B cell (primary cell): ENCODE measurements at regions of chr2 and their contacts with region 1.

Region 1: DNA sequence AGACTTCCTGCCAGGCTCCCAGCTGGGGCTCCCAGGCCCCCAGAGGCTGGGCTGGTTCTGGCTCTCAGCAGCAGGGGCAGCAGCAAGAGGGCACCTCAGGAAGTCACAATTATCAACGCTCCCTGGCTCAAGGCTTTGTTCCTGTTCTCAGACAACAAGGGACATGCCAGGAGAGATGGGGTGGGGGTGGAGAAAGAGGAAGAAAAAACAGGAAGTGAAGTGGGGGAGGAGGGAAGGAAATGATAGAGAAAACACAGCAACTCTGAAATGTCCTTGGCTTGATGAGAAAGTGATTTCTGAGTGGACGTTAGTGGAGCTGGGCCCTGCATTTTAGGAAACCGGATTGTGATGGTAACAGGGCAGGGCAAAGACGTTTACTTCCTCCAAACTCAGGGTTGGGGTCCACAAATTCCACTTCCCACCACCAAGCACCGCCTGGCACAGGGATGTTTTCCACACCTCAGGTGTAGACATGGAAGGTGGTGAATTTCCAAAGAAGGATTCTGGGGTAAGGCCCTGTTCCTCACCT is 40.4 kb downstream of the CYRIA start:
- DNase-seq: peak; percentile 80
- ATAC-seq: peak; percentile 49
- H3K4me3 ChIP-seq: peak overlapping the region; percentile 33 to 58 (median 46)
- H3K4me3 Mint-ChIP-seq: peak overlapping the region; percentile 83
- H3K27ac ChIP-seq: peak overlapping the region; percentile 78 to 92
- H3K27ac Mint-ChIP-seq: peak overlapping the region; percentile 93
- H3K4me1 ChIP-seq: peaks cover 95 to 98% of the 10 kb centered on the region in 2 donors
- H3K4me1 Mint-ChIP-seq: peaks cover 98% of the 10 kb centered on the region
- H3K27me3 ChIP-seq: no peaks in the 10 kb centered on the region
- H3K27me3 Mint-ChIP-seq: no peaks in the 10 kb centered on the region
- CTCF ChIP-seq: no peak

Region 2: GRCh38 chr2:16608661-16609643 is 16.3 kb before region 1 on chr2:
- CTCF ChIA-PET with region 1: interaction called, 84 read pairs
- POLR2A ChIA-PET with region 1: no interaction called
- intact Hi-C with region 1: loop called (anchors 2 kb)
- DNase-seq: peak; percentile 86
- ATAC-seq: peak; percentile 95
- H3K4me3 ChIP-seq: peak overlapping the region; percentile 38 to 66 (median 60)
- H3K4me3 Mint-ChIP-seq: peak overlapping the region; percentile 87
- H3K27ac ChIP-seq: no peak overlapping the region
- H3K27ac Mint-ChIP-seq: peak overlapping the region; percentile 53
- H3K4me1 ChIP-seq: peaks cover 4 to 13% of the 10 kb centered on the region in 2 donors
- H3K4me1 Mint-ChIP-seq: peaks cover 27% of the 10 kb centered on the region
- H3K27me3 ChIP-seq: no peaks in the 10 kb centered on the region
- H3K27me3 Mint-ChIP-seq: no peaks in the 10 kb centered on the region
- CTCF ChIP-seq: peak; percentile 91

Region 3: DNA sequence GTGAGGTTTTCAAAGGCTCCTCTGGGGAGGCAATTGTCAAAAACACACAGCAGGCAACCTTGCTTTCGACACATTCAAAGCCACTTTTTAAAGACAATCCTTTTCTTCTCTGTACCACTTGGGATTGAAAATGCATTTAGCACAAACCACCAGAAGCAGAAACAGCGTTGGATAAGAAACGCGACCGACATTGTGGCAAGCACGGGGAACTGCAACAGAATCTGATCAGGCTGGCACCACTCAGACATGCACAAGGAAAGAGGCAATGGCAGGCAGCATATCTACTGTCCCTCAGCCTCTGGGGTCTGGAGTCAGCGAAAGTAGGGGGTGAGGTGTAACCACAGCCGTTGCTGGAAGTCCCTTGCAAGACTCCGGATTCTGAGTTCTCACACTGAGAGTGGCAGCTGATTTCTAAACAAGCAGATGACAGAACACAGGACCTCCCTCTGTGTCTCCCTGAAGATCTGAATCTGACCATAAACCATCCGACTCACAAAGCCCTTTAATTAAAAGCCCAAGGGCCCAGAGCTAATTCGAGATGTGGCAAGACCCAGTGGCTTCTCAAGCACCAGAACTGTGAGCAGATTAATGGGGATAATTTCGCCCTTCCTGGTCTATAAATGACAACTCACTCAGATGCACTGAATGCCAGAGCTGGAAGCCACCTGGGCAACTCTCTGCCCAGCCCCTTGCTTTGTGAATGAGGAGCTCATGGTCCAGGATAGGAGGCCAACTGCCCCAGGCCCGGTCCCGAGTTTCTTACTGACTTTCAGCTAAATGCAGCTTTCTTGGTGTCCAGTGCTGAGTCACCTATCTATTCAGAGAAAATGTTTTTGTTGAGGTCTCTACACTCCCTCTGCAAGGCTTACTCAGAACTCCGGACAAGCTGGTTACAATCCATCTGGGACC is 10.8 kb after region 1 on chr2:
- CTCF ChIA-PET with region 1: interaction called, 11 read pairs
- POLR2A ChIA-PET with region 1: no interaction called
- intact Hi-C with region 1: loop called (anchors 2 kb)
- DNase-seq: peak; percentile 37
- ATAC-seq: peak; percentile 55
- H3K4me3 ChIP-seq: no peak overlapping the region
- H3K4me3 Mint-ChIP-seq: peak overlapping the region; percentile 37
- H3K27ac ChIP-seq: no peak overlapping the region
- H3K27ac Mint-ChIP-seq: peak overlapping the region; percentile 69
- H3K4me1 ChIP-seq: peaks cover 31 to 79% of the 10 kb centered on the region in 2 donors
- H3K4me1 Mint-ChIP-seq: peaks cover 93% of the 10 kb centered on the region
- H3K27me3 ChIP-seq: no peaks in the 10 kb centered on the region
- H3K27me3 Mint-ChIP-seq: no peaks in the 10 kb centered on the region
- CTCF ChIP-seq: no peak

Region 4: DNA sequence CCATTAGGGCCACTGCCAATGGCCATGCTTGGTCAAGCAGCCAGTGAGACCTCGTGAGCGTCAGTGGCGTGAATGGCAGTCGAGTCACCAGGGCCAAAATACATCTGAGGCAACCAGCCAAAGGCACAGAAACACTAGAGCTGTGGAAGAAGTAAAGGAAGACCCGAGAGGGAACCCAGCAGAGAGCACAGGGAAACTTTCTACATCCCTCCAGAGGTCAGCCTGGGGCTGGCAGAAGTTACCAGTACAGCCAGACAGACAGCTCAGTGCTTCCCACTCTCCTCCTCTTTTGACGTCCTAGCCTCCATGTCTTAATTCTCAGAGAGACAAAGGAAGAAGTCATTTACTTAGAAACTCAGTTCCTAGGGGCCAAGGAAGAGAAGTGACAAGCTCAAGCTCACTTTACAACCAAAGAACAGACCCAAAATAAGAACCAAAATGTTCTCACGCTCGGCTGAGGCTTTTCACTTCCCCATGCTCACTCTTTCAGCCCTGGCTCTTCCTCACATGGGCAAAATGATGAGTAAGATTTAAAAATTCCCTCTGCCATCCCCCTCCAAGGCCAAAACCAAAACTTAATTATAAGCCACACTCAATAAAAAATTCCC is 31.6 kb after region 1 on chr2:
- CTCF ChIA-PET with region 1: interaction called, 50 read pairs
- POLR2A ChIA-PET with region 1: interaction called, 6 read pairs
- intact Hi-C with region 1: loop called (anchors 2 kb)
- DNase-seq: peak; percentile 82
- ATAC-seq: peak; percentile 65
- H3K4me3 ChIP-seq: peak overlapping the region in 3 of 5 experiments; percentile 16 to 43 (median 33)
- H3K4me3 Mint-ChIP-seq: peak overlapping the region; percentile 84
- H3K27ac ChIP-seq: peak overlapping the region; percentile 66 to 82
- H3K27ac Mint-ChIP-seq: peak overlapping the region; percentile 86
- H3K4me1 ChIP-seq: peaks cover 96 to 99% of the 10 kb centered on the region in 2 donors
- H3K4me1 Mint-ChIP-seq: peaks cover 98% of the 10 kb centered on the region
- H3K27me3 ChIP-seq: no peaks in the 10 kb centered on the region
- H3K27me3 Mint-ChIP-seq: no peaks in the 10 kb centered on the region
- CTCF ChIP-seq: no peak

Region 5: GRCh38 chr2:16665748-16666448 is 40.6 kb after region 1 on chr2 and contains the start of gene CYRIA:
- CTCF ChIA-PET with region 1: interaction called, 10 read pairs
- POLR2A ChIA-PET with region 1: interaction called, 8 read pairs
- intact Hi-C with region 1: loop called (anchors 1 kb)
- DNase-seq: peak; percentile 82
- ATAC-seq: peak; percentile 71
- H3K4me3 ChIP-seq: peak within 1 kb of the TSS; percentile 55 to 97 (median 91)
- H3K4me3 Mint-ChIP-seq: peak within 1 kb of the TSS; percentile 92
- H3K27ac ChIP-seq: peak within 1 kb of the TSS; percentile 72 to 87
- H3K27ac Mint-ChIP-seq: peak within 1 kb of the TSS; percentile 95
- H3K4me1 ChIP-seq: peaks cover 43 to 53% of the 10 kb centered on the region in 2 donors
- H3K4me1 Mint-ChIP-seq: peaks cover 55% of the 10 kb centered on the region
- H3K27me3 ChIP-seq: no peaks in the 10 kb centered on the region
- H3K27me3 Mint-ChIP-seq: no peaks in the 10 kb centered on the region
- CTCF ChIP-seq: no peak
- total RNA-seq, gene CYRIA: 58.8 and 59.0 TPM in 2 replicates

Region 6: DNA sequence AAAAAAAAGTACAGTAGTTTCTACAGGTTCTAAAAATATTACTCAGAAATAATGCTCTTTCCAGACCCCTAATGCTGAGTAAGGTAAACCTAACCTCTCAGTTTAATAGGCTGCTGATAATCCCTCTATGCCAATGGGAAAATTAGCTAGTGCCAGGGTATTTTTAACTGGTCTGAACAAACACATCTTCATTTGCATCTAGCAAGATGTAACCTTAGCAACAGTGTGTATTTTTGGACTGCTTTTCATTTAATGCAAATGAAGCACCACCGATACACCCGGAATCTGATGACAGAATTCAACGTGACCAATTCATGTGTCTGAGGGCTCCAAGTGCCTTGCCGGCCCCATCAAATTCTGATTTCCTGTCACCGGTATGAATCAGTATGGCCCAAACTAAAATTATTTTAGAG is 87.8 kb after region 1 on chr2:
- CTCF ChIA-PET with region 1: no interaction called
- POLR2A ChIA-PET with region 1: no interaction called
- intact Hi-C with region 1: loop called (anchors 5 kb)
- DNase-seq: peak; percentile 80
- ATAC-seq: peak; percentile 79
- H3K4me3 ChIP-seq: peak overlapping the region in 2 of 5 experiments; percentile 12 to 37
- H3K4me3 Mint-ChIP-seq: peak overlapping the region; percentile 52
- H3K27ac ChIP-seq: peak overlapping the region; percentile 77 to 84
- H3K27ac Mint-ChIP-seq: peak overlapping the region; percentile 88
- H3K4me1 ChIP-seq: peaks cover 36 to 44% of the 10 kb centered on the region in 2 donors
- H3K4me1 Mint-ChIP-seq: peaks cover 56% of the 10 kb centered on the region
- H3K27me3 ChIP-seq: no peaks in the 10 kb centered on the region
- H3K27me3 Mint-ChIP-seq: no peaks in the 10 kb centered on the region
- CTCF ChIP-seq: no peak

Region 7: DNA sequence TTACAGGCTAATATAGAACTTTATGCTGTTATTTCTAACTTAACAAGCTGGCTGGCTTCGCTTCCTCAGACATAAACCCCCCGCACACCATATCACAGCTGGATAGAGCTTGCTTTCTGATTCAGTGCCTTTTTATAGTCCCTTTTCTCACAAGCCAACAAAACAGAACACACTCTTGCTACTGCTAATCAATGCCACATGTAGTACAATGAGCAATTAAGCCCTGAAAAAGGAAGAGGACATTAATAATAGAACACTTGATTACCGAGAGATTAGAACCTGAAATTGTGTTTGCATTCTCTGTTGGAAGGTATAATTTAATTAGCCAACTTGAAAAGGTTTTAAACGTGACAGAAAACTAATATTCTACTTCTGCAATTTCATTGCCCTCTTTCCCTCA is 308.1 kb after region 1 on chr2:
- CTCF ChIA-PET with region 1: no interaction called
- POLR2A ChIA-PET with region 1: no interaction called
- intact Hi-C with region 1: no loop called
- DNase-seq: no peak
- ATAC-seq: no peak
- H3K4me3 ChIP-seq: no peak overlapping the region
- H3K4me3 Mint-ChIP-seq: no peak overlapping the region
- H3K27ac ChIP-seq: no peak overlapping the region
- H3K27ac Mint-ChIP-seq: no peak overlapping the region
- H3K4me1 ChIP-seq: no peaks in the 10 kb centered on the region
- H3K4me1 Mint-ChIP-seq: no peaks in the 10 kb centered on the region
- H3K27me3 ChIP-seq: no peaks in the 10 kb centered on the region
- H3K27me3 Mint-ChIP-seq: peaks cover 6% of the 10 kb centered on the region
- CTCF ChIP-seq: no peak

Region 8: DNA sequence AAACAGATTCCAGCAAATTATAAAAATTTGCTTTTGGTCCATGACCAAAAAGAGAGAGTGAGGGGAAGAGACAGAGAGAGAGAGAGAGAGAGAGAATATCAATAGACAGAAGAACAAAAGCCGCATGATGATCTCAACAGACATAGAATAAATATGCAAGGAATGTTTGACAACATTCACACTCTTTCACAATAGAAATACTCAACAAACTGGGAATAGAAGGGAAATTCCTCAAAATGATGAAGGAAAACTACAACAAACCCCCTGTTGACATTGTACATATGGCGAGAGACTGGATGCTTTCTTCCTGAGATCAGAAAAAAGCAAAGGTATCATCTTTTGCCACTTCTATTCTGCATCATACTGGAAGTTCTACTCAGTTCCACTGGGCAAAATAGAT is 583.2 kb after region 1 on chr2:
- CTCF ChIA-PET with region 1: no interaction called
- POLR2A ChIA-PET with region 1: no interaction called
- intact Hi-C with region 1: loop called (anchors 10 kb)
- DNase-seq: no peak
- ATAC-seq: no peak
- H3K4me3 ChIP-seq: no peak overlapping the region
- H3K4me3 Mint-ChIP-seq: no peak overlapping the region
- H3K27ac ChIP-seq: no peak overlapping the region
- H3K27ac Mint-ChIP-seq: no peak overlapping the region
- H3K4me1 ChIP-seq: peaks cover 7 to 9% of the 10 kb centered on the region in 2 donors
- H3K4me1 Mint-ChIP-seq: peaks cover 25% of the 10 kb centered on the region
- H3K27me3 ChIP-seq: no peaks in the 10 kb centered on the region
- H3K27me3 Mint-ChIP-seq: no peaks in the 10 kb centered on the region
- CTCF ChIP-seq: no peak

Region 9: GRCh38 chr2:18319987-18320386 is 1694.7 kb after region 1 on chr2:
- CTCF ChIA-PET with region 1: no interaction called
- POLR2A ChIA-PET with region 1: no interaction called
- intact Hi-C with region 1: no loop called
- DNase-seq: no peak
- ATAC-seq: no peak
- H3K4me3 ChIP-seq: no peak overlapping the region
- H3K4me3 Mint-ChIP-seq: no peak overlapping the region
- H3K27ac ChIP-seq: no peak overlapping the region
- H3K27ac Mint-ChIP-seq: no peak overlapping the region
- H3K4me1 ChIP-seq: no peaks in the 10 kb centered on the region
- H3K4me1 Mint-ChIP-seq: no peaks in the 10 kb centered on the region
- H3K27me3 ChIP-seq: no peaks in the 10 kb centered on the region
- H3K27me3 Mint-ChIP-seq: peaks cover 3% of the 10 kb centered on the region
- CTCF ChIP-seq: no peak